Activated CD8-positive, alpha-beta T cell treated with anti-CD3 and anti-CD28 coated beads, Interleukin-2, amount 10 ng/mL, durations not matched to agents 7 days and 5 days (primary cell): ENCODE measurements at regions of chr1 and their contacts with region 1.

Region 1: GRCh38 chr1:234610348-234611152 is 572 bp upstream of the IRF2BP2 start:
- DNase-seq: peak; percentile 91
- ATAC-seq: peak; percentile 46
- H3K4me3 Mint-ChIP-seq: peak overlapping the region; percentile 87
- H3K27ac Mint-ChIP-seq: peak overlapping the region; percentile 98
- H3K4me1 Mint-ChIP-seq: peaks cover 42% of the 10 kb centered on the region
- H3K27me3 Mint-ChIP-seq: no peaks in the 10 kb centered on the region

Region 2: DNA sequence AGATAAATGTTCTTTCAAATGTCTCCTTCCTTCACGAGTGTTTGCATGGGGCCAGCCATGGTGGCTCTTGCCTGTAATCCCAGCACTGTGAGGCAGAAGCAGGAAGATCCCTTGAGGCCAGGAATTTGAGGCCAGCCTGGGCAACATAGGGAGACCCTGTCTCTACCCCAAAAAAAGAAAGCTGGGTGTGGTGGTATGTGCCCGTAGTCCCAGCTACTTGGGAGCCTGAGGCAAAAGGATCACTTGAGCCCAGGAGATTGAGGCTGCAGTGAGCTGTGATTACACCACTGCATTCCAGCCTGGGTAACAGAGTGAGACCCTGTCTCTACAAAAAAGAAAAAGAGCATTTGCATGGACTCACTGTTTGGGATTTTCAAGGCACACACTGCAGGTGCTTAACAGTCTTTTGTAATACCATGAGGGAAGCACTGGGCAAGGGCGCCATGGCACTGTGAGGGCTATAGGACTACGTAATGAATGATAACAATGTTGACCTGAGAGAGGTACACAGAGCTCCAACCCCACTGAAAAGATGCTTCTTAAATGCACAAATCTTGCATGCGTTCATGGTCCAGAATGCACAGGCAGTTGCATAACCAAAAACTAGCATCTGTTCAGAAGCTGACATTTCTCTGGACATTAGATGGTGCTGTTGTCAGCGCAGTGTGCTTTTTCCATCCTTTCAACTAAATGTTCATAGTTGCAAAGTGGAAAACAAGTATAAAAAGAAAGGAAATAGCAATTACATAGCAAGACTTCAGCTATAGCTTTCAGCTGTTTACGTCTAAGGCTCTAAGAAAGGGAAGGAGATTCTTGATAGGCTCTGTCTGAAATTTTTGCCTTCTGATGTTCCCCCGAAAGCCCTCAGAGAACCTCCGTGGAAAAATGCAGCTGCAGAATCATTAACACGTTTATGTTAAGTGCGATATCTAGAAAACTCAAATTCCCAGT is 123.8 kb before region 1 on chr1:
- CTCF ChIA-PET with region 1: interaction called, 13 read pairs
- POLR2A ChIA-PET with region 1: interaction called, 3 read pairs
- DNase-seq: peak; percentile 59
- ATAC-seq: peak; percentile 66
- H3K4me3 Mint-ChIP-seq: no peak overlapping the region
- H3K27ac Mint-ChIP-seq: no peak overlapping the region
- H3K4me1 Mint-ChIP-seq: peaks cover 31% of the 10 kb centered on the region
- H3K27me3 Mint-ChIP-seq: peaks cover 20% of the 10 kb centered on the region

Region 3: DNA sequence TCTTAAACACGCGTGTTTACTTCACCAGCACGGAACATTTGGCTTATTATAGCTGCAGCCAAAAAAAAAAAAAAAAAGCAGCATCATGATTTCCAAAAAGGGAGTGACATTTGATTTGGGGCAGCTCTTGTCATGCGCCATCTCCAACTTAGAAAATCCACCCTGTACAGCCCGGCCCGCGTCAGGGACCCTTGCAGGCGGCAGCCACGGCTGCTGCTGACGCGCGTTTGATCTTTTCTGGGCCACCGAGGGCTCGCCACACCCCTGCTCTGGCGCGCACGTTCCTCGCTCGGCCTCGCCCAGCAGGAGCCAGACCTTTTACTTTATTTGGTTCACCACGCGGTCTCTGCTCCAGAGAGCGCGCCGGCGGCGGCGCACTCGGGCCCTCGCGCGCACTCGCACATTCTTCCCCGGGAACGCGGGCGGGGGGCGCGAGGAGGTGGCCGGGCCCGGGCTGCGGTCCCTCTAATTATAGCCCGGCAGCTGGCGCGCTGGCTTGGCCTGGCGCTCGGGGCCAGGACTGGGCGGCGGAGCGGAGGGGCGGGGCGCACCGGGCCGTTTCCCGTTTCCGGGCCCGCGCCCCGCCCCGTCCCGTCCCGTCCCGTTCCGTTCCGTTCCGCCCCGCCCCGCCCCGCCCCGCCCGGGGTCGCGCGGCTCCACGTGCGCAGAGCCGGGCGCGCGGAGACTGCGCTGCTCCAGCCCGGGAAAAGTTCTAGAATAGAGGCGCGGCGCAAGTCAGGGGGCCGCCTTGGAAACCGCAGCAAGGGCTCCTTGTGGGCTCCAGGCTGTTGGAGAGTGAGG is 10.7 kb before region 1 on chr1:
- CTCF ChIA-PET with region 1: interaction called, 21 read pairs
- POLR2A ChIA-PET with region 1: interaction called, 101 read pairs
- DNase-seq: peak; percentile 81
- ATAC-seq: peak; percentile 72
- H3K4me3 Mint-ChIP-seq: peak overlapping the region; percentile 85
- H3K27ac Mint-ChIP-seq: peak overlapping the region; percentile 95
- H3K4me1 Mint-ChIP-seq: peaks cover 57% of the 10 kb centered on the region
- H3K27me3 Mint-ChIP-seq: no peaks in the 10 kb centered on the region

Region 4: GRCh38 chr1:234730770-234731568 is 120.4 kb after region 1 on chr1:
- CTCF ChIA-PET with region 1: interaction called, 75 read pairs
- POLR2A ChIA-PET with region 1: interaction called, 153 read pairs
- DNase-seq: peak; percentile 56
- ATAC-seq: peak; percentile 73
- H3K4me3 Mint-ChIP-seq: peak overlapping the region; percentile 16
- H3K27ac Mint-ChIP-seq: peak overlapping the region; percentile 87
- H3K4me1 Mint-ChIP-seq: peaks cover 73% of the 10 kb centered on the region
- H3K27me3 Mint-ChIP-seq: no peaks in the 10 kb centered on the region

Region 5: DNA sequence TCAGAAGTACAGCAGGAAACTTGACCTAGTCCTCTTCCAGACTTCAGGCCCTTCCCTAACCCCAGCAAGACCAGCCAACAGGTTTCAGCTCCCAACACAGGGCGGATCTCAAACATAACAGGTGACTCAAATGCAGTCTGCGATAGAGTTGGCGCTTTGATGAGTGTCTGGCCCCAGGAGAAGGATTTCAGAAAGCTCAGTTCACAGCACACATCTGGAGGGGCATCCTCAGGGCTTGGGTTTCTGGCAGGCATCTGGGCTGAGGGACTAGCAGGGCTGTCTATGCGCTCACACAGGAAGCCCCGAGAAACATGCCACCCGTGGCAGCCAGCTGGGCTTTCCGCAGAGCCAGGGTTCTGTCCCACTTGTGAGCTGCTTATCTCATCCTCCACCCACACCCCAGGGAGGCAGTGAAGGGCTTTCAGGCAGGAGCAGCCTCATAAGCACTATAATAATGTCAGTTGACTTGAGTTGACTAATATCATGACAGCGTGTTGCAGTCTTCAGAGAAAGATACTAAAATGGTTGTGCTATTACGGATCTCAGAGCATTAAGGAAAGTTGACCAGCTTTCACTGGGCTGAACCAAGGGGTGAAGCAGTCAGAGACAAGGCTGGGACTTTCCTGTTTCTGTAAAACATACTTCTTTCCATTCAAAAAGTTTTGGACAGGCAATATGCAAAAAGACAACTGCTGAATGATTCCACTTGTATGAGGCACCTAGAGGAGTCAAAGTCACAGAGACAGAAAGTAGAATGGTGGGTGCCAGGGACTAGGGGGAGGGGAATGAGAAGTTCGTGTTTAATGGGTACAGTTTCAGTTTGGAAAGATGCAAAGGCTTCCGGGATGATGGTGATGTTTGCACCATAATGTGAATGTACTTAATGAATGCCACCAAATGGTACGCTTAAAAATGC is 232.4 kb after region 1 on chr1:
- CTCF ChIA-PET with region 1: interaction called, 15 read pairs
- POLR2A ChIA-PET with region 1: interaction called, 65 read pairs
- DNase-seq: peak; percentile 67
- ATAC-seq: peak; percentile 58
- H3K4me3 Mint-ChIP-seq: peak overlapping the region; percentile 47
- H3K27ac Mint-ChIP-seq: peak overlapping the region; percentile 89
- H3K4me1 Mint-ChIP-seq: peaks cover 85% of the 10 kb centered on the region
- H3K27me3 Mint-ChIP-seq: no peaks in the 10 kb centered on the region

Region 6: GRCh38 chr1:234963180-234963903 is 352.8 kb after region 1 on chr1:
- CTCF ChIA-PET with region 1: interaction called, 6 read pairs
- POLR2A ChIA-PET with region 1: interaction called, 29 read pairs
- DNase-seq: peak; percentile 94
- ATAC-seq: peak; percentile 84
- H3K4me3 Mint-ChIP-seq: peak overlapping the region; percentile 66
- H3K27ac Mint-ChIP-seq: peak overlapping the region; percentile 93
- H3K4me1 Mint-ChIP-seq: peaks cover 71% of the 10 kb centered on the region
- H3K27me3 Mint-ChIP-seq: no peaks in the 10 kb centered on the region

Region 7: DNA sequence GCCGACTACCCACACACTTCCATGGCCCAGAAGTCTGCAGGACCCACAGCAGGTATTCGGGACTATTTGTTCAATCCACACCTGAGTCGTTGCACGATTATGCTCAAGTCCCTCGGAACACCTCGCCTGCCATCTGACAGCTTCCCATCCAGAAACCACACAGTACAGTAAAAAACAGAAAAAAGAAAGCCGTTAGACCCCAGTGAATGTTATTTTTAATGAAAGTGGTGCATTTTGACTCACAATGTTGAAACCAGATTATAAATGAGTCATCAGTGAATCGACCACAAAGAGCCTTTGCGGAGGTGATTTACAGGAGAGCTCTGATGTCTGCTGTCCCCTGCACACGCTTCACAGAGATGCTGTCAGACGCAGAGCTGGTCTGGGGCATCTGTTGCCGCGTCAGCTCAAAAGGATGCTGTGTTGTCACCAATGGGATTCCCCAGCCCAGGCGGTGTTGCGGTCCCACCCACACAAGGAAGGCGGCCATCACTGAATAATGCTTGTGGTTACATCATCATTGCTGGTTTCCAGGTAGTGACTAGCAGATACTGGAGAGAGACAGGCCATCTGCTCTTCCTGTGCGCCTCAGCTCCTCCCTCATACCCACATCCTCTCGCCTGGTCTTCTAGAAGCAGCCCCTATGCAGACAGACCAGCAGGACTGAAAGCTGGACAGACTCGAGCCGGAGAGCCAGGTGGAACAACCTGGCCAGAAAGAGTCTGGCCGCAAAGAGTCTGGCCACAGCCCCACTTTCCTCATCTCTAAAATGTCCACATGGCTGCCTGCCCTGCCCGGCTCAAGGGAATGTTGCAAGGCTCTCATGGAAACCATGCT is 401.3 kb after region 1 on chr1:
- CTCF ChIA-PET with region 1: interaction called, 7 read pairs
- POLR2A ChIA-PET with region 1: interaction called, 27 read pairs
- DNase-seq: peak; percentile 98
- ATAC-seq: peak; percentile 97
- H3K4me3 Mint-ChIP-seq: peak overlapping the region; percentile 74
- H3K27ac Mint-ChIP-seq: peak overlapping the region; percentile 99
- H3K4me1 Mint-ChIP-seq: peaks cover 86% of the 10 kb centered on the region
- H3K27me3 Mint-ChIP-seq: no peaks in the 10 kb centered on the region